Psoas muscle (tissue), 8 donors: ENCODE measurements at regions of chr9 and their contacts with region 1.

Region 1: GRCh38 chr9:23477908-23478307 is 348.1 kb downstream of the ELAVL2 start:
- DNase-seq: no peak
- ATAC-seq: no peak
- H3K4me3 ChIP-seq: no peak overlapping the region
- H3K27ac ChIP-seq: no peak overlapping the region
- H3K4me1 ChIP-seq: no peaks in the 10 kb centered on the region
- H3K27me3 ChIP-seq: no peaks in the 10 kb centered on the region
- CTCF ChIP-seq: no peak

Region 2: DNA sequence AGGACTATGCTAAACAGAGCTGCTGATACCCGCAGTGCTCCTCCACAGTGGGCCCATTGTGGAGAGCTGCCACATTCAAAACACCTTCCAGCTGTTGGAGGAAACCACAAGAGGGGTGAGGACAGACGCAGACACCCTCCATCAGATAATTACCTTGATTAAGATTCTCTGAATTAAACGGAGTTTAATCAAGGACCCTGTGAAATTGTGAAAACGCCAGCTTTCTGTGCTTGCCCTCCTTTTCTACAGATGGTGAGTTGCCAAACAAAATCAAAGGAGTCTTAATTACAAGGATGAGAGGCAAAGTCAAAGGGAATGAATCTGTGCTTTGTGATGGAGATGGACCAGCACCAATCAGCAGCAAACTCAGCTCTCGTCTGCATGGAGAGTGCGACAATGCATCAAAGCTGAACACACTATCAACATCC is 248.0 kb before region 1 on chr9:
- intact Hi-C with region 1: loop called in 1 of 2 experiments (anchors 10 kb)
- DNase-seq: no peak
- ATAC-seq: no peak
- H3K4me3 ChIP-seq: no peak overlapping the region
- H3K27ac ChIP-seq: no peak overlapping the region
- H3K4me1 ChIP-seq: no peaks in the 10 kb centered on the region
- H3K27me3 ChIP-seq: no peaks in the 10 kb centered on the region
- CTCF ChIP-seq: no peak